HEK293T (cell line): ENCODE measurements at regions of chr16 and their contacts with region 1.

Region 1: GRCh38 chr16:88770461-88771293 is 14.3 kb downstream of the PIEZO1 start:
- DNase-seq: peak; percentile 77

Region 2: DNA sequence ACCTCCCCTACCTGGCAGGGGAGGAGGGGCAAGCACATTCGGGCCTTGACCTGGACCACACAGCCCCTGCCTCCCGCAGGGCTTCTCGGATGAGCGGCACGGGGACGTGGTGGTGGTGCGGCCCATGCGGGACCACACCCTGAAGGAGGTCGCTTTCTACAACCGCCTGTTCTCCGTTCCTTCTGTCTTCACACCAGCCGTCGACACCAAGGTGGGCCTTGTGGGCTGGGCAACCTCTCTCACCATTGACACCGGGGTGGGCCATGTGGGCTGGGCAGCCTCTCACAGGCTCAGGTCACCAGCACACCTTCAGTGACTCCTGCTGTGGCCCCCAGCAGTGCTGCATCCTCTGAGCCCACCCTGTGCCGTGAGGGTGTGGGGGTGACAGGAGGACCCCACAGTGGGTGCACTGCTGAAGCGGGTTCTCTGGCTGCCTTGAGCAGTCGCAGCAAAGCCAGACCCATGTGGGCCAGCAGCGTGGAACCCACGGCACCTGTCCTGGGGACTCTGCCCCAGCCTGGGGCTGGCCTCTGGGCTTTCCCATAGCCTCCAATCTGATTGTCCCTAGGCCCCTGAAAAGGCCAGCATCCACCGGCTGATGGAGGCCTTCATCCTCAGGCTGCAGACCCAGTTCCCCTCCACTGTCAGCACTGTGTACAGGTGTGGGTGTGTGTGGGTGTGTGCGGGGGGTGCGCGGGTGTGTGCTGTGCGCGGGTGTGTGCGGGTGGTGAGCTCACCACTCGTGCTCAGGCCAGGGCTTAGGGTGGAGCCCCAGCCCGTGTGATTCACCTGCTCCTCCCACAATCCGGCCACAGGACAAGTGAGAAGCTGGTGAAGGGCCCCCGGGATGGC is 56.9 kb before region 1 on chr16:
- CTCF ChIA-PET with region 1: no interaction called
- POLR2A ChIA-PET with region 1: no interaction called
- DNase-seq: no peak

Region 3: DNA sequence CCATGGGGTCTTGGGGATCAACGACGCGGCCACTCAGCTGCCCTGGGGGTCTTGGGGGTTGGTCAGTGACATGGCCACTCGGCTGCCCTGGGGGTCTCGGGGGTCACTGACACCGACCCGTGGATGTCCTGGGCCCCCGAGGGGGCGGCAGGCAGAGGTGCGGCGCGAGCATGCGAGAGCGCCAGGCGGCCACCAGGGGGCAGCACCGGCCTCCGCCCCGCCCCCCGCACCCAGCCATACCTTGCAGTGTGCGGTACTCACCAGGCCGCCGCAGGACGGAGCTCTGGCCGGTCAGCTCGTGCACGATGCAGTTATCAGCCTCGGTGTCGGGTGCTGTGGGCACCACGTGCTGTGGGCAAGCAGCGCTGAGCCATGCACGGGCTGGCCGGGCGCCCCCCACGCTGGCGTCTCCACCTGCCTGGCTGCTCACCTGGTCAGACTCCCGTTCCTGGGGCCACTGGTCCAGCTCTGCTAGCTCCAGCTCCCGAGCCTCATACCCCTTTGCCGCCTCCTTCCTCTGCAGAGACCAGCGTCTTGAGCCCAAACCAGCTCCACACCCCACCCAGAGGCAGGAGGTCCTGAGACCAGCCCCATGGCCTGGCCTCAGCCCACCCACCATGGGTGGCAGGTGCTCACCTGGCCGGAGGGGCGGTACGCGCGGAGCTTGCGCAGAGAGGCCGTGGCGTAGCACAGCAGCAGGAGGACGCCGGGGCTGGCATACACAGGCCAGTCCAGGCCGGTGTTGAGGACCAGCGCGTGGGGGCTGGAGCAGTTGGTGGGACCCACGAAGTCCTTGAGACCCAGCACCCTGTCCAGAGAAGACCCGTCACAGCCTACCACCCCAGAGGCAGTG is 33.2 kb before region 1 on chr16:
- CTCF ChIA-PET with region 1: interaction called, 10 read pairs
- POLR2A ChIA-PET with region 1: no interaction called
- DNase-seq: peak; percentile 87

Region 4: GRCh38 chr16:88785106-88785924 is 14.6 kb after region 1 on chr16 and contains the start of gene PIEZO1:
- CTCF ChIA-PET with region 1: no interaction called
- POLR2A ChIA-PET with region 1: interaction called, 30 read pairs
- DNase-seq: peak; percentile 69

Region 5: GRCh38 chr16:89132291-89133005 is 361.8 kb after region 1 on chr16:
- CTCF ChIA-PET with region 1: no interaction called
- POLR2A ChIA-PET with region 1: no interaction called
- DNase-seq: no peak